ENCODE measurements at regions of chr2 and their contacts with region 1.

Region 1: GRCh38 chr2:219171231-219171651 is 1.4 kb upstream of the SLC23A3 start:
- DNase-seq: peak in 1 of 6 donors; percentile 52
- ATAC-seq: peak; percentile 53 to 78 (median 71)
- H3K4me3 ChIP-seq: no peak overlapping the region
- H3K27ac ChIP-seq: no peak overlapping the region
- H3K4me1 ChIP-seq: peaks cover 5 to 9% (median 7%) of the 10 kb centered on the region in 3 donors
- H3K27me3 ChIP-seq: no peaks in the 10 kb centered on the region
- CTCF ChIP-seq: peak; percentile 52 to 64 (median 61)

Region 2: GRCh38 chr2:219294356-219295351 is 123.4 kb after region 1 on chr2:
- intact Hi-C with region 1: loop called in 2 of 3 experiments (anchors 5 kb)
- DNase-seq: peak; percentile 79 to 98 (median 94)
- ATAC-seq: peak; percentile 90 to 97 (median 95)
- H3K4me3 ChIP-seq: peak overlapping the region; percentile 23 to 51 (median 39)
- H3K27ac ChIP-seq: peak overlapping the region; percentile 35 to 54 (median 43)
- H3K4me1 ChIP-seq: no peaks in the 10 kb centered on the region
- H3K27me3 ChIP-seq: no peaks in the 10 kb centered on the region
- CTCF ChIP-seq: peak; percentile 97 to 100 (median 98)

Region 3: DNA sequence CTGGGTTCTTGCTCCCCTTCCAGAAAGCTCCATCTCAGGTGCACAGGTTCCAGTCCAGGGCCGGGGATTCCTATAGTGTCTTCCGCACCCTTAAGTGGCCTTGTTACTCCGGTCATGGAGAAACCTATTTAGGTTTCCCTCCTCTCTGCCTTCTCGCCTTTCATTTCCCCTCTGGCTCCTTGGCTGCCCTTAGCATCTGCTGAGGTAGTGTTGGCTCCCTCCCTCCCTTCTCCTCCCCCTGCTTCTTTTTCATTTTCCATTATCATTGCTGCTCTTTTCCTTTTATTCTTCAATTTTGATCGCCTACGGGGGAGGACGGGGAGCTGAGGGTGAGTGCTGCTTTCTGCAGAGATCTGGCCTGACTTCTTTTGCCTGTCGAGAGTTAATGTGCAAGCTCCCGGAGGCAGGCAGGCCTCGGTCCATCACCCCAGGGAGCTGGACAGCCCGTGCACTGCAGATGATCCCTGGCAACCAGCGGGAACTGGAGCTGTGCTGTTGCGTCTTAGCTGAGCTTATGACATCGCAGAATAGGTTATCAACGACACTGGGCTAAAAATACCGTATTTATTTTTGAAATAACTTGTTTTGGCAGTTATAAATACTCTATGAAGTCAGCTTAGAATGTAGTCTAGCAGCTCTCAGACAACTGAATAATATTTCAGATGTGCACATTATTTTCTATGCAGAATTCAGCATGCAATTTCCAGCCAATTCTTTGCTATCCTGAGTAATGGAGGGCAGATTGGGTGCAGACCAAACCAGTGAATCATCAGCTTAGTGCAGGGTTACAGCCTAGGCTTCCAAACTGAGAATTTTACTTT is 598.1 kb after region 1 on chr2:
- intact Hi-C with region 1: no loop called
- DNase-seq: no peak
- ATAC-seq: peak in 3 of 4 donors; percentile 36 to 58 (median 39)
- H3K4me3 ChIP-seq: no peak overlapping the region
- H3K27ac ChIP-seq: no peak overlapping the region
- H3K4me1 ChIP-seq: peaks cover 0 to 5% (median 0%) of the 10 kb centered on the region in 3 donors
- H3K27me3 ChIP-seq: peaks cover 0 to 25% (median 0%) of the 10 kb centered on the region in 4 donors
- CTCF ChIP-seq: no peak

Measured in pancreas (tissue), 10 donors.